ENCODE measurements at regions of chr6 and their contacts with region 1.

Region 1: DNA sequence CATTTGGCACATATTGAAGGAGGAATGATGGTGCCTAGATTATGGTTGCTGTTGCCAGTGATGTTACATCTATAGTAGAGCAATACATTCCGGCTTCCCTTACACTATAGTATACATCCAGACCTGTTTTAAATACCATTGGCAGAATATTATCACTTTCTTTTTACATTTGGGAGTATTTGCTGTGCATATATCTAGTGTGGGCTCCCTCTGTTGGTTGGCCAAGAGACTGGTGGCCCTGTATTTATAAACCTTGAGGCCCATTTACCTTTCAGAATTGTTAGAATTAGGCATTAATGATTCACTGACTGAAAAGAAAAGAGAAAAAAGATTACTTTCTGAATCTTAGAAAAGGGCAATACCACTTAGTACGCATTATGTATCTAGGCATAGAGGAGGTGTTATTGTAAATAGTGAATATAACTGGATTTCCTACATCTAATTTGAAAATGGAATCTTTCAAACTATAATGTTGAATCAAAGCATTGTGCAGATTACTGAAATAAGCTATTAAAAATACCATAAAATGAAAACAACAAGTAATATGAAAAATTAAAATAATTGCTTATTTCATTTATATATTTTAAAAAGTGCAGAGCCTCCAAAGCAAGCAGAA is 628.8 kb upstream of the MAN1A1 start:
- DNase-seq: peak in 1 of 2 experiments; percentile 6
- H3K4me3 ChIP-seq: no peak overlapping the region
- H3K4me3 Mint-ChIP-seq: no peak overlapping the region
- H3K27ac Mint-ChIP-seq: no peak overlapping the region
- H3K4me1 ChIP-seq: no peaks in the 10 kb centered on the region
- H3K4me1 Mint-ChIP-seq: no peaks in the 10 kb centered on the region
- H3K27me3 ChIP-seq: no peaks in the 10 kb centered on the region
- H3K27me3 Mint-ChIP-seq: no peaks in the 10 kb centered on the region
- CTCF ChIP-seq: peak; percentile 52 to 54

Region 2: DNA sequence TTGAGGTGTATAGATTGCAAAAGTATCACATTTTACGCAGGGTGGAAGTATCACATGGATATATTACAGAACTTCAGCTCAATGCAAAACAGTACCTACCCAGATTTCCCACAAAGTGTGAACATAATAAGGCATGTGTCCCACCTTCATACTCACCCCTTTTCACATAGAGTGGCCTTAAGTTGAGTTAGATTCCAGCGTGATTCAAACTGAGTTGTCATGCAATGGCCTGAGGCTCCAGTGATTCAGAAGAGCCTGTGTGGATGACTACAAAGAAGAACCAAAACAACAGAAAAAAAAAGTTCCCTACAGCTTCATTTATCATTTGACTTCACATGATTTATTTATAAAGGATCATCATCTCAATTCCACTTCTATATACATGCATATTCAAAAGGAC is 1761.6 kb before region 1 on chr6:
- CTCF ChIA-PET with region 1: no interaction called
- POLR2A ChIA-PET with region 1: no interaction called
- intact Hi-C with region 1: no loop called
- DNase-seq: no peak
- H3K4me3 ChIP-seq: no peak overlapping the region
- H3K4me3 Mint-ChIP-seq: no peak overlapping the region
- H3K27ac Mint-ChIP-seq: no peak overlapping the region
- H3K4me1 ChIP-seq: no peaks in the 10 kb centered on the region
- H3K4me1 Mint-ChIP-seq: no peaks in the 10 kb centered on the region
- H3K27me3 ChIP-seq: no peaks in the 10 kb centered on the region
- H3K27me3 Mint-ChIP-seq: peaks cover 2% of the 10 kb centered on the region
- CTCF ChIP-seq: no peak

Region 3: DNA sequence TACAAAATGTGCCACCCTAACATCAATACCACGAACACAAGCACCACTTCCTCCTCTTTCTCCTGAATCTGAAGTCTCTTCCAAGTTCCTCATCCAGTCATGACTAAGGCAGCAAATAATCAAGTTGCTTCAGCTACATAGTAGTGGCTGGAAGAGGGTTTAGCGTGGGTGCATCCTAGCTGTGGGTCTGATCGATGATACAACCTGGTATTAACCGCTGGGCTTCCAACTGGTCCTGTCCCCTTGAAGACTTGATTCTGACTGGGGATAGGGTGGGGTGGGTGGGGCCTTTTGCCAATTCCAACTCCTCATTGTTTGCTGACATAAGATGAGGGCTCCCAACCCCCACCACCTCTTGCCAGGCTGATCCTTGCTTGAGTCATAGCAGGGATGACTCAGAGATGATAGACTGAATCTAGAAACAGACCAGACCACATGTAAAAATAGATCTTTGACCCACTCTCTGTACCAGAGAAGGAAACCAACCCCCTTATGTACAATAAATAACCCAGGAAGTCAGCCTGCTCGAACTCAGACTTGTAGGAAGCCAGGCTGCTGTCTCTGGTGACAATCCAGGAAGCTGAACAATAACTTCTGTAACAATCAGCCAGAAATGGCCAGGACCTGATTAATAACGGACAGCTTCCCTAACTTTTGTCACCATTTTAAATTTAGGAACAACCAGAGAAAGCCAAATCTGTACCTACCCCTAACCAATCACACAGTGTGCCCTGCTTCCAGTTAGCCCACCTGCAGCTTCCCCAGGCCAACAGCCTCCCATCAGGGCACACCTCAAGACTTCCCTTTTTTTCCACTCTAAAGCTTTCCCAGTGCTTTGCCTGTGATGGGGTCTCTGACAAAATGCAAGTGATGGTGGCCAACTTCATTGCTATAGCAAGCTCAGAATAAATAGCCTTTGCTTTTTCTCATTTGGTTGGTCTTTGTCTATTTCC is 831.0 kb before region 1 on chr6:
- CTCF ChIA-PET with region 1: no interaction called
- POLR2A ChIA-PET with region 1: no interaction called
- intact Hi-C with region 1: loop called (anchors 2 kb)
- DNase-seq: peak; percentile 21 to 53
- H3K4me3 ChIP-seq: no peak overlapping the region
- H3K4me3 Mint-ChIP-seq: no peak overlapping the region
- H3K27ac Mint-ChIP-seq: peak overlapping the region; percentile 66
- H3K4me1 ChIP-seq: peaks cover 18% of the 10 kb centered on the region
- H3K4me1 Mint-ChIP-seq: peaks cover 22% of the 10 kb centered on the region
- H3K27me3 ChIP-seq: no peaks in the 10 kb centered on the region
- H3K27me3 Mint-ChIP-seq: no peaks in the 10 kb centered on the region
- CTCF ChIP-seq: no peak

Region 4: DNA sequence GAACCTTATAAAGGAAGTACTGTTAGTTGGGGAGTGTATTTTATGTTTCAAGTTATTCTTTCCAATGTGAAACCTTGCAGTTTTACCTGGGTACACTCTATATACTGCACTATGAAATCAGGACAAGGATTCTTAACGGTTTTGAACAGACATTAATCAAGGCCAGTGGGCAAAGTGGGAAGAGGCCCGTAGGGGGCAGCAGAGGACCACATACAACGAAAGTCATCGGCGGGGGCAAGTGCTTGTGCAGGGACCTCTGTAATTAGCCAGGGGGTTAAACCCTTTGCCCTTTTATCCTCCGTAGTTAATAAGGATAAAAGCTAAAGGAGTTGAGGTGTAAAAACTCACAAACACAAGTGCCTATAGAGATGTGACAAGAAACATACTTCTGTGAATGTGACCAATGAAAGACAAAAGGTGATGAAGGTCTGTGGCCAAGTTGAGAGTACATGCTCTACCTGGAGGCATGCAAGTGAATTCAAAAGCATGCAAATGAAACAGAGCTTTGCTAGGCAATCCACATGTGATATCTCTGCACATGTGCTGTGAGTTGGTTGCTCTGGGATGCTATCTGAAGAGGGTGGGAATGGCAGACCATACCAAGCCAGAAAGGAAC is 236.1 kb before region 1 on chr6:
- CTCF ChIA-PET with region 1: no interaction called
- POLR2A ChIA-PET with region 1: no interaction called
- intact Hi-C with region 1: loop called (anchors 1 kb)
- DNase-seq: peak; percentile 54 to 73
- H3K4me3 ChIP-seq: no peak overlapping the region
- H3K4me3 Mint-ChIP-seq: no peak overlapping the region
- H3K27ac Mint-ChIP-seq: no peak overlapping the region
- H3K4me1 ChIP-seq: no peaks in the 10 kb centered on the region
- H3K4me1 Mint-ChIP-seq: no peaks in the 10 kb centered on the region
- H3K27me3 ChIP-seq: no peaks in the 10 kb centered on the region
- H3K27me3 Mint-ChIP-seq: no peaks in the 10 kb centered on the region
- CTCF ChIP-seq: peak; percentile 85

Region 5: DNA sequence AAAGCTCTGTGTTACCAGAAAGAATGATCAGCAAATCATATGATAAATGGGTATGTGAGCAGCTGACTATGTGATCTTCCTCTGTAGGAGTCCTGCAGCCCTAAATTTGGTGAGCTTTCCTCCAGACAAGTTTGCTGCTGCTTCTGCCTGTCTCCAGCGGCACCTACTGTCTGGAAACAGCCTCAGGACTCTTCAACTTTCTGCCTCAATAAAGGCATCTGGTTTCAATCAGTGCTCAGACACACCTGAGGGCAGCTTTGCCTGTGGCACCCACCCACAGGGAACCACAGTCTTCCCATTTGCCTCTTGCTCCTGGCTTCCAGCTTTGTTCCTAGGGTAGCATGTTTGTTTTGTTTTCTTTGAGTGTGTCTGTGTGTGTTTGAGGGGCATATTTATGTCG is 99.1 kb after region 1 on chr6:
- CTCF ChIA-PET with region 1: no interaction called
- POLR2A ChIA-PET with region 1: no interaction called
- intact Hi-C with region 1: loop called (anchors 1 kb)
- DNase-seq: peak; percentile 23 to 38
- H3K4me3 ChIP-seq: no peak overlapping the region
- H3K4me3 Mint-ChIP-seq: no peak overlapping the region
- H3K27ac Mint-ChIP-seq: no peak overlapping the region
- H3K4me1 ChIP-seq: no peaks in the 10 kb centered on the region
- H3K4me1 Mint-ChIP-seq: no peaks in the 10 kb centered on the region
- H3K27me3 ChIP-seq: no peaks in the 10 kb centered on the region
- H3K27me3 Mint-ChIP-seq: no peaks in the 10 kb centered on the region
- CTCF ChIP-seq: no peak

Region 6: GRCh38 chr6:120230010-120230409 is 251.6 kb after region 1 on chr6:
- CTCF ChIA-PET with region 1: no interaction called
- POLR2A ChIA-PET with region 1: no interaction called
- intact Hi-C with region 1: loop called (anchors 1 kb)
- DNase-seq: peak in 1 of 2 experiments; percentile 38
- H3K4me3 ChIP-seq: no peak overlapping the region
- H3K4me3 Mint-ChIP-seq: no peak overlapping the region
- H3K27ac Mint-ChIP-seq: no peak overlapping the region
- H3K4me1 ChIP-seq: no peaks in the 10 kb centered on the region
- H3K4me1 Mint-ChIP-seq: peaks cover 6% of the 10 kb centered on the region
- H3K27me3 ChIP-seq: no peaks in the 10 kb centered on the region
- H3K27me3 Mint-ChIP-seq: no peaks in the 10 kb centered on the region
- CTCF ChIP-seq: peak; percentile 18 to 43

Region 7: GRCh38 chr6:120378582-120379220 is 400.3 kb after region 1 on chr6:
- CTCF ChIA-PET with region 1: no interaction called
- POLR2A ChIA-PET with region 1: no interaction called
- intact Hi-C with region 1: loop called (anchors 2 kb)
- DNase-seq: peak in 1 of 2 experiments; percentile 32
- H3K4me3 ChIP-seq: no peak overlapping the region
- H3K4me3 Mint-ChIP-seq: no peak overlapping the region
- H3K27ac Mint-ChIP-seq: no peak overlapping the region
- H3K4me1 ChIP-seq: no peaks in the 10 kb centered on the region
- H3K4me1 Mint-ChIP-seq: no peaks in the 10 kb centered on the region
- H3K27me3 ChIP-seq: no peaks in the 10 kb centered on the region
- H3K27me3 Mint-ChIP-seq: no peaks in the 10 kb centered on the region
- CTCF ChIP-seq: peak; percentile 58 to 74